ENCODE measurements at regions of chr1 and their contacts with region 1.

Region 1: DNA sequence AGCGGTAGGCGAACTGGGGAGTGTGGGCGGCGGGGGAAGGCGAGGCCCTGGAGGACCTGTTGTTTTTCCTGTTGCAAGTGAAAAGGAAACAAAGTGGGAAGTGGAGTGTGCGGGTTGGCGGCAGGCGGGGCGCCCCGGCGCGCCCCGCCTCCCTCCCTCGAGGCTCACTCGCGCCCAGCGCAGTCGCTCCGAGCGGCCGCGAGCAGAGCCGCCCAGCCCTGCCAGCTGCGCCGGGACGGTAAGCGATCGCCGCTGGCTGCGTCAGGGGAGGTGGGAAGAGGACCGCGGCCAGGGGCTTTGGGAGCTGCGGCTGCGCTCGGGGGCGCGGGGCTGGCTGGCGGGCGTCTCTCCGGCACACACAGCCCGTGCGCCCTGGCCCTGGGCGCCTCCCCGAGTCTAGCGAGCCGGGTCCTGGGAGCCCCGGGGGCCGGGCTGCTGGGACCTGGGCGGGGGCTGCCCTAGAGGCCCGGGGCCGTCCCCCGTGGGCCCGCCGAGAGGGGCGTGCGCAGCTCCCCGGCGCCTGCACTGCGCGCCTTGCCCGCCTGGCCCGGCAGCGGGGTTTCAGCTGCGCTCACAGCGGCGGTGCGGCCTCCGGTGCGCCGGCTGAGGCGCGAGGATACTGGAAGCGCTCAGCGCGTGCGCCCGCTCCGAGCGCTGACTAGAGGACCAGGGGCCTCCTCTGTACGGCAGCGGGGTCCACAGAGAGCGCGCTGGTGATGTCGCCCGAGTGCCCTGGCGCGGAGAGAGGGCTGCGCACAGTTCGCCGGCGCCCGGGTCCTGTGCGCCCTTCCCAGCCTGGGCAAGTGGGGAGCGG is at the start of gene PIK3CD:
- DNase-seq: peak in 6 of 9 donors; percentile 14 to 59 (median 32)
- ATAC-seq: peak; percentile 49
- H3K4me3 ChIP-seq: peak within 1 kb of the TSS; percentile 84
- H3K4me3 Mint-ChIP-seq: peak within 1 kb of the TSS; percentile 96 to 100 (median 99)
- H3K27ac ChIP-seq: peak within 1 kb of the TSS; percentile 79
- H3K27ac Mint-ChIP-seq: peak within 1 kb of the TSS; percentile 95 to 99 (median 98)
- H3K4me1 ChIP-seq: peaks cover 27 to 46% of the 10 kb centered on the region in 2 donors
- H3K4me1 Mint-ChIP-seq: peaks cover 26 to 70% (median 61%) of the 10 kb centered on the region in 7 donors
- H3K27me3 ChIP-seq: no peaks in the 10 kb centered on the region
- H3K27me3 Mint-ChIP-seq: no peaks in the 10 kb centered on the region
- total RNA-seq, gene PIK3CD: 269 to 313 (median 283) TPM

Region 2: GRCh38 chr1:9211291-9211811 is 440.4 kb before region 1 on chr1:
- CTCF ChIA-PET with region 1: no interaction called
- POLR2A ChIA-PET with region 1: no interaction called
- intact Hi-C with region 1: no loop called
- DNase-seq: no peak
- ATAC-seq: no peak
- H3K4me3 ChIP-seq: no peak overlapping the region
- H3K4me3 Mint-ChIP-seq: no peak overlapping the region
- H3K27ac ChIP-seq: no peak overlapping the region
- H3K27ac Mint-ChIP-seq: peak overlapping the region in 1 of 9 donors; percentile 80
- H3K4me1 ChIP-seq: no peaks in the 10 kb centered on the region
- H3K4me1 Mint-ChIP-seq: peaks cover 0 to 2% (median 0%) of the 10 kb centered on the region in 7 donors
- H3K27me3 ChIP-seq: peaks cover 0 to 3% of the 10 kb centered on the region in 2 donors
- H3K27me3 Mint-ChIP-seq: peaks cover 17 to 41% (median 20%) of the 10 kb centered on the region in 5 donors

Region 3: GRCh38 chr1:9665193-9665592 is 13.4 kb after region 1 on chr1:
- CTCF ChIA-PET with region 1: interaction called, 3 read pairs
- POLR2A ChIA-PET with region 1: interaction called, 63 read pairs
- intact Hi-C with region 1: loop called (anchors 2 kb)
- DNase-seq: no peak
- ATAC-seq: no peak
- H3K4me3 ChIP-seq: no peak overlapping the region
- H3K4me3 Mint-ChIP-seq: peak overlapping the region in 9 of 10 donors; percentile 8 to 70 (median 46)
- H3K27ac ChIP-seq: peak overlapping the region; percentile 29
- H3K27ac Mint-ChIP-seq: peak overlapping the region in 8 of 9 donors; percentile 52 to 92 (median 68)
- H3K4me1 ChIP-seq: peaks cover 18 to 26% of the 10 kb centered on the region in 2 donors
- H3K4me1 Mint-ChIP-seq: peaks cover 29 to 65% (median 55%) of the 10 kb centered on the region in 7 donors
- H3K27me3 ChIP-seq: no peaks in the 10 kb centered on the region
- H3K27me3 Mint-ChIP-seq: no peaks in the 10 kb centered on the region

Region 4: GRCh38 chr1:9671377-9672140 is 19.8 kb after region 1 on chr1:
- CTCF ChIA-PET with region 1: interaction called, 3 read pairs
- POLR2A ChIA-PET with region 1: interaction called, 63 read pairs
- intact Hi-C with region 1: loop called (anchors 2 kb)
- DNase-seq: no peak
- ATAC-seq: no peak
- H3K4me3 ChIP-seq: no peak overlapping the region
- H3K4me3 Mint-ChIP-seq: peak overlapping the region in 6 of 10 donors; percentile 29 to 48 (median 38)
- H3K27ac ChIP-seq: peak overlapping the region; percentile 34
- H3K27ac Mint-ChIP-seq: peak overlapping the region; percentile 2 to 87 (median 60)
- H3K4me1 ChIP-seq: peaks cover 28 to 34% of the 10 kb centered on the region in 2 donors
- H3K4me1 Mint-ChIP-seq: peaks cover 42 to 81% (median 71%) of the 10 kb centered on the region in 7 donors
- H3K27me3 ChIP-seq: no peaks in the 10 kb centered on the region
- H3K27me3 Mint-ChIP-seq: no peaks in the 10 kb centered on the region

Region 5: GRCh38 chr1:9689011-9689706 is 37.4 kb after region 1 on chr1:
- CTCF ChIA-PET with region 1: interaction called, 8 read pairs
- POLR2A ChIA-PET with region 1: interaction called, 111 read pairs
- intact Hi-C with region 1: loop called (anchors 1 kb)
- DNase-seq: peak; percentile 62 to 89 (median 82)
- ATAC-seq: peak; percentile 93
- H3K4me3 ChIP-seq: peak overlapping the region; percentile 50
- H3K4me3 Mint-ChIP-seq: peak overlapping the region; percentile 80 to 90 (median 87)
- H3K27ac ChIP-seq: peak overlapping the region; percentile 70
- H3K27ac Mint-ChIP-seq: peak overlapping the region in 8 of 9 donors; percentile 59 to 90 (median 78)
- H3K4me1 ChIP-seq: peaks cover 53 to 59% of the 10 kb centered on the region in 2 donors
- H3K4me1 Mint-ChIP-seq: peaks cover 36 to 85% (median 73%) of the 10 kb centered on the region in 7 donors
- H3K27me3 ChIP-seq: no peaks in the 10 kb centered on the region
- H3K27me3 Mint-ChIP-seq: no peaks in the 10 kb centered on the region

Region 6: GRCh38 chr1:9699361-9699760 is 47.6 kb after region 1 on chr1:
- CTCF ChIA-PET with region 1: interaction called, 6 read pairs
- POLR2A ChIA-PET with region 1: interaction called, 15 read pairs
- intact Hi-C with region 1: no loop called
- DNase-seq: no peak
- ATAC-seq: no peak
- H3K4me3 ChIP-seq: no peak overlapping the region
- H3K4me3 Mint-ChIP-seq: peak overlapping the region in 4 of 10 donors; percentile 3 to 60 (median 23)
- H3K27ac ChIP-seq: no peak overlapping the region
- H3K27ac Mint-ChIP-seq: peak overlapping the region in 8 of 9 donors; percentile 21 to 86 (median 64)
- H3K4me1 ChIP-seq: peaks cover 19 to 36% of the 10 kb centered on the region in 2 donors
- H3K4me1 Mint-ChIP-seq: peaks cover 38 to 80% (median 65%) of the 10 kb centered on the region in 7 donors
- H3K27me3 ChIP-seq: no peaks in the 10 kb centered on the region
- H3K27me3 Mint-ChIP-seq: no peaks in the 10 kb centered on the region

Region 7: DNA sequence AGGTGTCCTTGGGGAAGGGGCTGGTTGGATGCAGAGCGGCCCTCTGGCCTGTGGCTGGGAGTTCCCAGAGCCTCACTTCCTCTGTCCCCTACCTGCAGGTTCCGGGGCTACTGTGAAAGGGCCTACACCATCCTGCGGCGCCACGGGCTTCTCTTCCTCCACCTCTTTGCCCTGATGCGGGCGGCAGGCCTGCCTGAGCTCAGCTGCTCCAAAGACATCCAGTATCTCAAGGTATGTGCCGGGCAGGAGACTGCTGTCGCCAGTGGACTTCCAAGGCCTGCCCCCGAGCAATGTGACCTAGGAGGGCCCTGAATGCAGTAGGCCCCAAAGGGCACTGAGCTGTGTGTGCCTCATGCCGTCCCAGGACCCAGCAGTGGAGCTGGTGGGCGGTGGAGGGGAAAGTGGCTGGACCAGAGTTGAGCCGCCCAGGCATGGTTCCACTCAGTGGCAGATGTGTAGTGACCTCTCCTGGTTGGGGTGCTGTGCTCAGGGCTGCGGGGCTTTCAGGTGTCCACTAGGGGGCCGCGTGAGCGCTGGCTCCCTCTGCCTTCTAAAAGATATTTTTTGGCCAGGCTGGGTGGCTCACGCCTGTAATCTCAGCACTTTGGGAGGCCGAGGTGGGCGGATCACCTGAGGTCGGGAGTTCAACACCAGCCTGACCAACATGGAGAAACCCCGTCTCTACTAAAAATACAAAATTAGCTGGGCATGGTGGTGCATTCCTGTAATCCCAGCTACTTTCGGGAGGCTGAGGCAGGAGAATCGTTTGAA is 73.1 kb after region 1 on chr1:
- CTCF ChIA-PET with region 1: interaction called, 8 read pairs
- POLR2A ChIA-PET with region 1: interaction called, 280 read pairs
- intact Hi-C with region 1: loop called (anchors 2 kb)
- DNase-seq: peak; percentile 58 to 72 (median 64)
- ATAC-seq: peak; percentile 65
- H3K4me3 ChIP-seq: no peak overlapping the region
- H3K4me3 Mint-ChIP-seq: peak overlapping the region in 8 of 10 donors; percentile 14 to 68 (median 62)
- H3K27ac ChIP-seq: peak overlapping the region; percentile 51
- H3K27ac Mint-ChIP-seq: peak overlapping the region; percentile 73 to 88 (median 80)
- H3K4me1 ChIP-seq: peaks cover 36 to 83% of the 10 kb centered on the region in 2 donors
- H3K4me1 Mint-ChIP-seq: peaks cover 38 to 84% (median 60%) of the 10 kb centered on the region in 7 donors
- H3K27me3 ChIP-seq: no peaks in the 10 kb centered on the region
- H3K27me3 Mint-ChIP-seq: no peaks in the 10 kb centered on the region

Region 8: DNA sequence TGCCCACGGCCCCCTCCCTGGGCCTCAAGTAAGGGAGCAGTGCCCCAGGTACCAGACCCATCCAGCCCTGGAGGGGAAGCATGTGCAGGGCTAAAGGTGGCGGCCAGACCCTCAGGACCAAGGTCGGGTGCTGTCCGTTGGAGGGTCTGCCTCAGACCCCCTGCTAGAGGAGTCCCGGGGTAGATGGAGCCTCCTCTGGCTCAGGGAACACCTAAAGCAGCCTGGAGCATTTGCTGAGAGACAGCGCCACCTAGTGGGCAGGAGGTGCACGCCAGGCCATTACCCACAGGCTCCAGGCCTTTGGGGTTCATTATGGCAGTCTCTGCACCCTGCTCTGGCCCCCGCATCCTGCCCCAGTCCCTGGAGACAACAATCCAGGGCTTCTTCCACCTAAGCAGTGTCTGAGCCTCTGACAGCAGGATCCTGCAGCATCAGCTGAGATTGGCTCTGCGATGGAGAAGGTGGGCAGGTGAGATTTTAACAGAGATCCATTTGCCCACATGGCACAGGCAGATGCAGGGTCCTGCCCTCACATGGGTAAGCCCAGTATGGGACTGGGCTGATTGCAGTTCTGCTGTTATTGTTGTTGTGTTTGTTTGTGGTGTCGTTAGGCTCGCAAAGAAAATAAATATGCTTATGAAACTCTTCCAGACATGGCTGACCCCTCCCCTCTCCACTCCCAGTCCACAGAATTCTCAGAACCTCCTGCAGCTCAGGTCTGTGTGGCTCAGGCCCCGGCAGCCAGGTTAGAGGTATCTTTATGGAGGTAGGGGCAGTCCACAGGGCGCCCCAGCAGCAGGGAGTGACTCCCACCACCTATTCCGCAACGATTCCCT is 215.9 kb after region 1 on chr1:
- CTCF ChIA-PET with region 1: no interaction called
- POLR2A ChIA-PET with region 1: interaction called, 4 read pairs
- intact Hi-C with region 1: loop called in 1 of 2 experiments (anchors 1 kb)
- DNase-seq: peak; percentile 70 to 90 (median 84)
- ATAC-seq: peak; percentile 96
- H3K4me3 ChIP-seq: no peak overlapping the region
- H3K4me3 Mint-ChIP-seq: no peak overlapping the region
- H3K27ac ChIP-seq: no peak overlapping the region
- H3K27ac Mint-ChIP-seq: no peak overlapping the region
- H3K4me1 ChIP-seq: no peaks in the 10 kb centered on the region
- H3K4me1 Mint-ChIP-seq: peaks cover 0 to 7% (median 3%) of the 10 kb centered on the region in 7 donors
- H3K27me3 ChIP-seq: no peaks in the 10 kb centered on the region
- H3K27me3 Mint-ChIP-seq: no peaks in the 10 kb centered on the region

Region 9: GRCh38 chr1:9929431-9930385 is 277.9 kb after region 1 on chr1:
- CTCF ChIA-PET with region 1: no interaction called
- POLR2A ChIA-PET with region 1: no interaction called
- intact Hi-C with region 1: no loop called
- DNase-seq: no peak
- ATAC-seq: no peak
- H3K4me3 ChIP-seq: no peak overlapping the region
- H3K4me3 Mint-ChIP-seq: no peak overlapping the region
- H3K27ac ChIP-seq: no peak overlapping the region
- H3K27ac Mint-ChIP-seq: no peak overlapping the region
- H3K4me1 ChIP-seq: no peaks in the 10 kb centered on the region
- H3K4me1 Mint-ChIP-seq: peaks cover 0 to 6% (median 0%) of the 10 kb centered on the region in 7 donors
- H3K27me3 ChIP-seq: no peaks in the 10 kb centered on the region
- H3K27me3 Mint-ChIP-seq: no peaks in the 10 kb centered on the region

Region 10: DNA sequence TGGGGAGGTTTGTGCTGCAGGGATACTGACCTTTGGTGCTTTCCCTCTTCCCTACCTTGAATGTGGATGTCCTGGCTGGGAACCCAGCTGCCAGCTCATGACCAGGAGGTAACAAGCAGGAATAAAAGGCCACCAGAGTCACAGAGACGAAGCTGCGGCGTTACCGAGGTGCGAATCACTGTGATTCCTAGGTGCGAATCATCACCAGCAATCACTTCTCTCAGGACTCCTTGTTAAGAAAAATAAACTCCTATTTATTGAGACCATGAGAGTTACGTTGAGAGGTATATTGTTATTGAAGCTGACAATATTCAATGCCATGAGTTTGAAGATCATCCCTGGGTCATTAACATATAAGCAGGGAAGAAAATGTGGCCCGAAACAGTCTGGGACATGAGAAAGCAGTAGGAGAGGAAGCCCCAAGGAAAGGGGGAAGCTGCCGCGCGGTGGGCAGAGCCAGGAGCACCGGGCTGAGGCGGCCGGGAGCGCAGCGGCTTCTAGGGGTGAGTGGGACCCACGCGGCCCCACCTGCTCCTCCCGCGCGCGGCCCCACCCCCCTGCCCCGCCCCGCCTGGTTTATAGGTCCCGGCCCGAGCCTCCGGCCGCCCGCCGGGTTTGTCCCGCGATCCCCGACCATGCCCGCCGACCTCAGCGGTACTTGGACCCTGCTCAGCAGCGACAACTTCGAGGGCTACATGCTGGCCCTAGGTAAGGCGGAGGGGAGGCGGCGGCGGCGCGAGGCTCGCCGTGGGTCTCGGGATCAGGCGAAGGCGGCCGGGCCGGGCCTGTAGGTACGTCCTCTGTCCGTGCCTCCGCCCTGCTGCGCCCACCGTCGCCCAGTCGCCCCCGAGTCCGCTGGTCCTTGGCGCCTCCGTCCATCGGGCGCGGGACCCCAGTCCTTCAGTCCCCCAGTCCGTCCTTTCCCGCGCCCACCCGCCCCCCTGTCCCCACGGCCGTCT is 345.1 kb after region 1 on chr1 and contains the start of gene RBP7:
- CTCF ChIA-PET with region 1: no interaction called
- POLR2A ChIA-PET with region 1: no interaction called
- intact Hi-C with region 1: no loop called
- DNase-seq: peak in 6 of 9 donors; percentile 4 to 22 (median 7)
- ATAC-seq: peak; percentile 50
- H3K4me3 ChIP-seq: no peak within 1 kb of the TSS
- H3K4me3 Mint-ChIP-seq: peak within 1 kb of the TSS; percentile 79 to 96 (median 86)
- H3K27ac ChIP-seq: no peak within 1 kb of the TSS
- H3K27ac Mint-ChIP-seq: no peak within 1 kb of the TSS
- H3K4me1 ChIP-seq: no peaks in the 10 kb centered on the region
- H3K4me1 Mint-ChIP-seq: peaks cover 4 to 18% (median 10%) of the 10 kb centered on the region in 7 donors
- H3K27me3 ChIP-seq: peaks cover 0 to 3% of the 10 kb centered on the region in 2 donors
- H3K27me3 Mint-ChIP-seq: peaks cover 29 to 53% (median 37%) of the 10 kb centered on the region in 5 donors
- total RNA-seq, gene RBP7: 2.2 to 18.4 TPM in 2 of 5 experiments, not detected in the others

Measured in naive thymus-derived CD4-positive, alpha-beta T cell (primary cell).